B cell (primary cell): ENCODE measurements at regions of chr11 and their contacts with region 1.

Region 1: GRCh38 chr11:114738954-114739353 is 60.6 kb downstream of the NXPE2 start:
- DNase-seq: peak; percentile 8
- ATAC-seq: no peak
- H3K4me3 ChIP-seq: no peak overlapping the region
- H3K4me3 Mint-ChIP-seq: no peak overlapping the region
- H3K27ac ChIP-seq: no peak overlapping the region
- H3K27ac Mint-ChIP-seq: no peak overlapping the region
- H3K4me1 ChIP-seq: no peaks in the 10 kb centered on the region
- H3K4me1 Mint-ChIP-seq: no peaks in the 10 kb centered on the region
- H3K27me3 ChIP-seq: no peaks in the 10 kb centered on the region
- H3K27me3 Mint-ChIP-seq: no peaks in the 10 kb centered on the region
- CTCF ChIP-seq: peak; percentile 62

Region 2: GRCh38 chr11:116691771-116692177 is 1952.8 kb after region 1 on chr11:
- CTCF ChIA-PET with region 1: interaction called, 14 read pairs
- POLR2A ChIA-PET with region 1: no interaction called
- intact Hi-C with region 1: no loop called
- DNase-seq: peak; percentile 61
- ATAC-seq: peak; percentile 81
- H3K4me3 ChIP-seq: no peak overlapping the region
- H3K4me3 Mint-ChIP-seq: no peak overlapping the region
- H3K27ac ChIP-seq: no peak overlapping the region
- H3K27ac Mint-ChIP-seq: peak overlapping the region; percentile 4
- H3K4me1 ChIP-seq: no peaks in the 10 kb centered on the region
- H3K4me1 Mint-ChIP-seq: peaks cover 1% of the 10 kb centered on the region
- H3K27me3 ChIP-seq: peaks cover 0 to 6% (median 0%) of the 10 kb centered on the region in 4 experiments
- H3K27me3 Mint-ChIP-seq: peaks cover 8% of the 10 kb centered on the region
- CTCF ChIP-seq: peak; percentile 85